Dorsolateral prefrontal cortex (tissue), 120 donors: ENCODE measurements at regions of chr18 and their contacts with region 1.

Region 1: DNA sequence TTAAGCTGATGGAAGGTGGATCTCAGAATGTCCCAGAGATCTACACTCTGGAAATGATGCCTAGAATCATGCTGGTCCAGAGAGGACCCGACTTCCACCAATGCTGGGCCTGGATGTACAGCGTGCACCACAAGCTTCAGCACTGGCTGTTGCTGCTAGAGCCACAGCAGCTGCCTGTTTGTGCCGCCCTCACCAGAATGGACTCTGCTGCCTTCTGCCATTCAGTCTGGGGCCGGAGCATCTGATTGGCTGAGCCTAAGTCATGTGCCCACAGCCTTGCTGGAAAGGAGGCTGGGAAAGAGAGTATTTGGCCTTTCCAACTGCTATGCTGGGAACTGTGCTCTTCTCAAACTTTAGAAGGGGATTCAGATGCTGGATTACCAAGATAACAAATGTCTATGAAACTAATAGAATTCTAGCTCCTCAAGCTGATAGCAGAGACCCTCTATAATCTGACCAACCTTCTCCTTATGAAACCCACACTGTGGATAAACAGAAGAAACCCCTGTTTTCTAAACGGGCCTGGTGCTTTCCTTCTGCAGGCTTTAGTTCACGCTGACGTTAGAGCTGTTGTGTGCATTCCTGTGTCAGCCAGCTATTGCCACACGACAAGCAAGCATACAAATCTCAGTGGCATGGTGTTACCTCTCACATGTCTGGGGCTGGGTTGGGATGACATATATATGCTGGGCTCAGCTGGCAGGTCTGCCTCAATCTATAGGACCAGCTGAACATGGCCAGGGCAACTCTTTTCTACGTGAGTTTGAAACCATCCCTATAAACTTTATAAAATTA is 4.1 kb upstream of the LOXHD1 start:
- DNase-seq: peak; percentile 82 to 97 (median 95)
- H3K4me3 ChIP-seq: peak overlapping the region in 1 of 59 donors; percentile 23
- H3K27ac ChIP-seq: peak overlapping the region in 40 of 59 donors; percentile 3 to 83 (median 42)
- H3K27me3 ChIP-seq: no peaks in the 10 kb centered on the region
- CTCF ChIP-seq: peak in 20 of 56 donors; percentile 12 to 44 (median 18)

Region 2: GRCh38 chr18:46148810-46149209 is 512.3 kb before region 1 on chr18:
- intact Hi-C with region 1: loop called in 1 of 2 experiments (anchors 5 kb)
- DNase-seq: peak in 3 of 10 donors; percentile 31 to 40 (median 36)
- H3K4me3 ChIP-seq: no peak overlapping the region
- H3K27ac ChIP-seq: peak overlapping the region in 1 of 59 donors; percentile 9
- H3K27me3 ChIP-seq: no peaks in the 10 kb centered on the region
- CTCF ChIP-seq: peak; percentile 38 to 81 (median 69)

Region 3: DNA sequence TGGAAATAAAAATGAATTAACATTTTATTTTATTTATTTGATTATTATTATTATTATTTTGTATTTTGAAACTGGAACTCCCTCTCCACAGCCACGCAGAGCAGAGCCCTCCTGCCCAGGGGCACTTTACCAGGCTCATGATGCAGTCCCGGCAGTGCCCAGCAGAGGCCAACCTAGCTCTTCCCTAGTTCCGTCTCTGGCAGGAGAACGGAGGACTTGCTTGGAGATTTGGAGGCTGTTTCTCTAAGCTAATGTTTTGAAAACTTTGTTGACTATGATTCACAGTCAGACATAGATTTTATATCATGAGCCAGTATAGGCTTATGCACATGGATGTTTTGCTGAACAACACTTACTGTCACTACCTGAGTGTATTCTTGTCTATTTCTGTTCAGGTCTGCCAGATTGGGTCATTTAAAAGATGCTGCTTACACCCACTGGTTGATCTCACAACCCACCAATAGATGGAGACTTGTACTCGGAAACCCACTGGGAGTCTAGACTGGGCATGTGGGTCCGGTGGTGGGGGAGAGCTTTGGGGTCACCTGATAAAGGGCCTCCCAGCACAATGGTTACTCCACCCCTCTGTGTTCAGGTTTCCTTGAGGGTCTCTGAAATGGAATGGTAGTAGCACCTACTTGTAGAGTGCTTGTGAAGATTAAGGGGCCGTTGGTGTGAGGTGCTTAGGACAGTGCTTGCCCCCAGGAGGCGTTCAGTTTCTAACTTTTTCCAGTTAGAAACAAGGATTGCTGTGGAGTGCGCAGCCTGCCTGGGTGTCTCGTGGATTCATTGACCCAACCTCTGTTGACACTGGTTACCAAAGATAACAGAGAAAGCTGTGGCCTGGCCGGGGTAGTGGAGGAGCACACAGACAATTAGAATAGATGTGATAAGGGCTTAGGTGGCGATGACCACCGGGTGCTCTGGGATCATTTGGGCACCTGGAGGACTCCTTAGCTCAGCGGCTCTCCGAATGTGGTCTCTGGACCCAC is 379.7 kb before region 1 on chr18:
- intact Hi-C with region 1: loop called (anchors 1 to 5 kb)
- DNase-seq: peak; percentile 56 to 83 (median 70)
- H3K4me3 ChIP-seq: no peak overlapping the region
- H3K27ac ChIP-seq: no peak overlapping the region
- H3K27me3 ChIP-seq: no peaks in the 10 kb centered on the region
- CTCF ChIP-seq: peak; percentile 54 to 99 (median 90)

Region 4: DNA sequence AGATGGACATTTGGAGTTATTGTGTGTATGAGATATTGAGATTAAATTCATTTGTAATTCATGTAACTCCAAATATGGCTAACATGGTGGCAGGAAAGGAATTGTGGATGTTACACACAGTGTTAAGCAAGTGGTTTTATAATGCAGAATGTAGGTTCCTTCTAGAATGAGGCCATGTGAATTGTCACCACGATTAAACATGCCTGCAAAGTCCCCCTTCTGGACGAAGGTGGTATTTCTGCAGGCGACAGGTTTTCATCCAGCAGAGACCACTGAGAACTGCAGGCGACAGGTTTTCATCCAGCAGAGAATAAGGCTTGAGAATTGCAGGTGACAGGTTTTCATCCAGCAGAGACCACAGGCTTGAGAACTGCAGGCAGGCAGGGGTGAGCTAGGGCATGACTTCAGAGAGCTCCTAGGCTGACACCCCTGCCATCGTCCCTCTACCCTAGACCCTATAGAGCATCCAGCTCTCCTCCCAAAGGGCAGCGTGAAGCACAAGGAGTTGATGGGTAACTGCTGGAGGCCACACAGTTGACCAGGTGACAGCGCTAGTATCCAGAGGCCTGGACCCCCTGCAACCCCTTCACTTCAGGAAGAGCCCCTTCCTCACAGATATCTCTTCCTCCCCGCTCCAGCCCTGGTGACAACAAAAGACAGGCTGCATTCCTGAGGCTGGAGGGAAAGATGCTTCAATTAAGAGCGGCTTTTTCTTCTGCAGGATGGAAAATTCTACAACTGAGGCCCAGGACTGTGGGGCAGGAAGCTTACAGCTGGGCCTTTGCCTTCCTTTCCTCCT is 179.9 kb before region 1 on chr18:
- intact Hi-C with region 1: loop called in 1 of 2 experiments (anchors 5 kb)
- DNase-seq: peak in 2 of 10 donors; percentile 42 to 71
- H3K4me3 ChIP-seq: no peak overlapping the region
- H3K27ac ChIP-seq: no peak overlapping the region
- H3K27me3 ChIP-seq: peaks cover 0 to 8% (median 0%) of the 10 kb centered on the region in 45 donors
- CTCF ChIP-seq: peak; percentile 23 to 73 (median 58)

Region 5: GRCh38 chr18:46555724-46556123 is 105.4 kb before region 1 on chr18:
- intact Hi-C with region 1: loop called (anchors 2 to 5 kb)
- DNase-seq: peak; percentile 5 to 81 (median 65)
- H3K4me3 ChIP-seq: no peak overlapping the region
- H3K27ac ChIP-seq: peak overlapping the region in 54 of 59 donors; percentile 6 to 94 (median 78)
- H3K27me3 ChIP-seq: no peaks in the 10 kb centered on the region
- CTCF ChIP-seq: peak in 54 of 56 donors; percentile 25 to 79 (median 60)

Region 6: GRCh38 chr18:46621111-46621766 is 39.9 kb before region 1 on chr18:
- intact Hi-C with region 1: no loop called
- DNase-seq: no peak
- H3K4me3 ChIP-seq: no peak overlapping the region
- H3K27ac ChIP-seq: no peak overlapping the region
- H3K27me3 ChIP-seq: no peaks in the 10 kb centered on the region
- CTCF ChIP-seq: no peak

Region 7: GRCh38 chr18:46859855-46860254 is 198.7 kb after region 1 on chr18:
- intact Hi-C with region 1: loop called in 1 of 2 experiments (anchors 5 kb)
- DNase-seq: no peak
- H3K4me3 ChIP-seq: no peak overlapping the region
- H3K27ac ChIP-seq: no peak overlapping the region
- H3K27me3 ChIP-seq: no peaks in the 10 kb centered on the region
- CTCF ChIP-seq: no peak

Region 8: GRCh38 chr18:46917108-46917802 is 256.1 kb after region 1 on chr18 and contains the starts of genes KATNAL2 and PIAS2:
- intact Hi-C with region 1: loop called in 1 of 2 experiments (anchors 5 kb)
- DNase-seq: peak; percentile 68 to 91 (median 81)
- H3K4me3 ChIP-seq: peak within 1 kb of the TSS; percentile 43 to 93 (median 79)
- H3K27ac ChIP-seq: peak within 1 kb of the TSS; percentile 55 to 97 (median 93)
- H3K27me3 ChIP-seq: no peaks in the 10 kb centered on the region
- CTCF ChIP-seq: peak in 23 of 56 donors; percentile 15 to 61 (median 35)
- total RNA-seq, gene KATNAL2: 6.5 to 35.7 (median 17.6) TPM
- total RNA-seq, gene PIAS2: 56.7 to 117 (median 80.3) TPM